ENCODE measurements at regions of chr6 and their contacts with region 1.

Region 1: GRCh38 chr6:97594844-97595243 is 311.8 kb upstream of the MMS22L start:
- DNase-seq: no peak
- ATAC-seq: peak; percentile 72

Region 2: GRCh38 chr6:97630604-97631003 is 35.8 kb after region 1 on chr6:
- intact Hi-C with region 1: no loop called
- DNase-seq: no peak
- ATAC-seq: no peak

Region 3: GRCh38 chr6:97669191-97670031 is 74.6 kb after region 1 on chr6:
- intact Hi-C with region 1: loop called (anchors 2 kb)
- DNase-seq: peak; percentile 59
- ATAC-seq: peak; percentile 84

Measured in Right ventricle myocardium inferior (tissue), 1 donor.